ENCODE measurements at regions of chr5 and their contacts with region 1.

Region 1: DNA sequence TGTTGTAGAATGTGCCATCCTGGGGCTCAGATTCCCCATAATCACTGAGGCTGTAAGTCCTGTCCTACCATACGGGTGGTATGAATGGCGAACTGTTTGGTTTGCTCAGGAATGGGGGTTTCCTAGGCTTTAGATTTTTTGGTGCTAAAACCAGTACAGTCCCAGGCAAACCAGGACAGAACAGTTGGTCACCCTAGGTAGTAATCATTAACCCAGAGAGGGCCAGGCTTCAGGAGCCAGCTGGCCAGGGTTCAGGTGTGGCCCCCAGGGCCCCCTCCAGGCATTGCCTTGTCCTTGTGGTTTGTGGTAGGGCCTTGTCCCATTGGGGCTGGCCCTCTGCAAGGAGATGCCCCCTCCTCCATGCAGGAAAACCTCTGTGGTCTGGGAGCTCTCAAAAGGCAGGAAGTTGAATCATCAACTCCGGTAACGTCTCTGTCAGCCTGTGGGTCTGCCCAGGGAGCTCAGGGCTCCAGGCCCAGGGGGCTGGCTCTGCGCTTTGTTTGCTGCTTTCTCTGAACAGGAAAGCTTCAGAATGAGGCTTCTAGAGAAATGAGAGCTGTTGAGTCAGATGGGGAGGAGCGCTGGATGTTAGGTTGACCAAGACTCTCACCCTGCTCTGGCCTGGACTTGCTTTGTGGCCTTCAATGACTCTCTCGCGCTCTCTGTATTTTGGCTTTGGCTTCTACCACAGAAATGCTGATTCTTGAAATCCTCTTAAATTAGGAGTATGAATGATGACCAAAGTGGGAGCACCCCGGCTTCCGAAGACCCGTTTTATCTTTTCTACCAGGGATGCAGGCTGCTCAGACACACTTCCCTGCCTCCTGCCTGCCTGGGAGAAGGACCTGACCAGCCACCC is 22.2 kb upstream of the JADE2 start:
- DNase-seq: peak; percentile 64 to 68
- ATAC-seq: peak; percentile 56 to 87 (median 66)
- H3K4me3 ChIP-seq: no peak overlapping the region
- H3K27ac ChIP-seq: peak overlapping the region; percentile 23 to 86 (median 78)
- H3K4me1 ChIP-seq: peaks cover 4 to 46% (median 36%) of the 10 kb centered on the region in 9 donors
- H3K27me3 ChIP-seq: no peaks in the 10 kb centered on the region
- CTCF ChIP-seq: no peak

Region 2: GRCh38 chr5:134403951-134404350 is 99.4 kb before region 1 on chr5:
- intact Hi-C with region 1: no loop called
- DNase-seq: no peak
- ATAC-seq: no peak
- H3K4me3 ChIP-seq: no peak overlapping the region
- H3K27ac ChIP-seq: no peak overlapping the region
- H3K4me1 ChIP-seq: peaks cover 0 to 6% (median 0%) of the 10 kb centered on the region in 9 donors
- H3K27me3 ChIP-seq: no peaks in the 10 kb centered on the region
- CTCF ChIP-seq: no peak

Region 3: DNA sequence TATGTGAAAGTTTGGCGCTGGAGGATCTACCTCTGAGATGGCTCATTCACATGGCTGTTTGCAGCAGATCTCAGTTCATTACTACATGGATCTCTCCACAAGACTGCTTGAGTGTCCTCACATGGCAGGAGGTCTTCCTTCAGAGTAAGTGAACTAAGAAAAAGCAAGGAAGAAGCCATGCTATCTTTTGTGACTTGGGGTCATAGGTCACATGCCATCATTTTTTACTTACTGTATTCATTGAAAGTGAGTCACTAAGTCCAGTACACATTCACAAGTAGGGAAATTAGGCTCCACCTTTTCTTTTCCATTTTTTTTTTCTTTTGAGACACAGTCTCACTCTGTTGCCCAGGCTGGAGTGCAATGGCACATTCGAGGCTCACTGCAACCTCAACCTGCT is 83.0 kb before region 1 on chr5:
- intact Hi-C with region 1: loop called in 1 of 10 experiments (anchors 5 kb)
- DNase-seq: no peak
- ATAC-seq: no peak
- H3K4me3 ChIP-seq: no peak overlapping the region
- H3K27ac ChIP-seq: no peak overlapping the region
- H3K4me1 ChIP-seq: no peaks in the 10 kb centered on the region
- H3K27me3 ChIP-seq: no peaks in the 10 kb centered on the region
- CTCF ChIP-seq: no peak

Region 4: GRCh38 chr5:134626369-134627014 is 123.2 kb after region 1 on chr5:
- intact Hi-C with region 1: no loop called
- DNase-seq: no peak
- ATAC-seq: peak in 4 of 8 donors; percentile 40 to 74 (median 42)
- H3K4me3 ChIP-seq: no peak overlapping the region
- H3K27ac ChIP-seq: peak overlapping the region in 1 of 10 donors; percentile 42
- H3K4me1 ChIP-seq: peaks cover 0 to 24% (median 15%) of the 10 kb centered on the region in 9 donors
- H3K27me3 ChIP-seq: no peaks in the 10 kb centered on the region
- CTCF ChIP-seq: no peak